ENCODE measurements at regions of chr2 and their contacts with region 1.

Region 1: GRCh38 chr2:202033321-202034248 is at the start of gene FZD7:
- DNase-seq: peak; percentile 90 to 92
- ATAC-seq: peak; percentile 60 to 63
- H3K4me3 ChIP-seq: peak within 1 kb of the TSS; percentile 80 to 97 (median 92)
- H3K27ac ChIP-seq: peak within 1 kb of the TSS; percentile 98 to 100 (median 99)
- H3K4me1 ChIP-seq: peaks cover 33 to 45% of the 10 kb centered on the region in 2 donors
- H3K27me3 ChIP-seq: no peaks in the 10 kb centered on the region
- CTCF ChIP-seq: peak in 3 of 5 experiments; percentile 14 to 44 (median 27)
- POLR2A ChIP-seq: peak; percentile 95 to 97
- total RNA-seq, gene FZD7: 4.4 to 9.4 (median 6.4) TPM

Region 2: GRCh38 chr2:201780674-201781581 is 252.7 kb before region 1 on chr2 and contains the start of gene ALS2:
- in situ Hi-C with region 1: loop called in 1 of 4 experiments (anchors 5 kb)
- intact Hi-C with region 1: loop called (anchors 10 kb)
- DNase-seq: peak; percentile 95 to 98
- ATAC-seq: peak; percentile 99 to 100
- H3K4me3 ChIP-seq: peak within 1 kb of the TSS; percentile 69 to 97 (median 88)
- H3K27ac ChIP-seq: peak within 1 kb of the TSS; percentile 88 to 92 (median 90)
- H3K4me1 ChIP-seq: peaks cover 29 to 31% of the 10 kb centered on the region in 2 donors
- H3K27me3 ChIP-seq: no peaks in the 10 kb centered on the region
- CTCF ChIP-seq: no peak
- POLR2A ChIP-seq: peak; percentile 62 to 67
- total RNA-seq, gene ALS2: 17.1 to 40.6 (median 19.5) TPM

Region 3: GRCh38 chr2:201882353-201883090 is 151.1 kb before region 1 on chr2:
- in situ Hi-C with region 1: loop called in 1 of 4 experiments (anchors 10 kb)
- intact Hi-C with region 1: loop called (anchors 5 kb)
- DNase-seq: no peak
- ATAC-seq: no peak
- H3K4me3 ChIP-seq: peak overlapping the region in 1 of 4 donors; percentile 4
- H3K27ac ChIP-seq: peak overlapping the region; percentile 82 to 90 (median 84)
- H3K4me1 ChIP-seq: peaks cover 28 to 43% of the 10 kb centered on the region in 2 donors
- H3K27me3 ChIP-seq: no peaks in the 10 kb centered on the region
- CTCF ChIP-seq: no peak
- POLR2A ChIP-seq: no peak

Region 4: DNA sequence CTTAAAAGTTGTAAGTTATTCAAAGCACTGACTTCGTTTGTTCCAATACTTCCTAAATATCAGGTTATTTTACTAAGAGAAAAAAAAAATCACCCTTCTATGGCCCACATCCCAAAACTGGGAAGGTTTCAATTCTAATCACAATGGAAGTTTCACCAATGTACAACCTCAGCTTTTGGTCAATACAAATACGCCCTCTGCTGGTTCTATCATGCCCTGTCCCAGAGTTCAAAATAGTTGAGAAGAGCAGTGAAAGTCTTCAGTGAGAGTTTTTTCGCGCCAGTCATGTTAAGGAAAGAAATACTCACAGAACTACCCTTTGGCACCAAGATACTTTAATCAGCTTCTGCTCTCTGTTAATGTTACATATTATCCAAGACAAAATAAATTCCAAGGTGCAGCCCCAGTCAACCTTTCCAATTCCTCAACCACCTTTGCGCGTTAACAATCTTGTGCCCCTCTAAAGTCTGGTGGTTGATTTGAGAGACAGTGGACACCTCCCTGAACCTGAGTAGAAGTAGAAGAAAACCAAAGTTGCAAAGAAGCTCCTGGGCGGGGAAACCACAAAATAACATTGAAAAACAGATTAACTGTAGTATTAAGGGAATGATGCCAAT is 144.9 kb after region 1 on chr2:
- in situ Hi-C with region 1: loop called in 1 of 4 experiments (anchors 5 kb)
- intact Hi-C with region 1: loop called (anchors 1 kb)
- DNase-seq: peak; percentile 22 to 38
- ATAC-seq: peak; percentile 90 to 96
- H3K4me3 ChIP-seq: no peak overlapping the region
- H3K27ac ChIP-seq: no peak overlapping the region
- H3K4me1 ChIP-seq: no peaks in the 10 kb centered on the region
- H3K27me3 ChIP-seq: no peaks in the 10 kb centered on the region
- CTCF ChIP-seq: peak; percentile 75 to 88 (median 79)
- POLR2A ChIP-seq: no peak

Region 5: GRCh38 chr2:202265467-202266277 is 232.1 kb after region 1 on chr2 and contains the start of gene NOP58:
- in situ Hi-C with region 1: no loop called
- intact Hi-C with region 1: loop called (anchors 10 kb)
- DNase-seq: peak; percentile 91 to 92
- ATAC-seq: peak; percentile 99
- H3K4me3 ChIP-seq: peak within 1 kb of the TSS; percentile 77 to 98 (median 85)
- H3K27ac ChIP-seq: peak within 1 kb of the TSS; percentile 95 to 100 (median 98)
- H3K4me1 ChIP-seq: peaks cover 24 to 25% of the 10 kb centered on the region in 2 donors
- H3K27me3 ChIP-seq: no peaks in the 10 kb centered on the region
- CTCF ChIP-seq: peak in 1 of 5 experiments; percentile 6
- POLR2A ChIP-seq: peak; percentile 98 to 99
- total RNA-seq, gene NOP58: 22.5 to 69.9 (median 31.7) TPM

Region 6: GRCh38 chr2:203014456-203015199 is 981.0 kb after region 1 on chr2 and contains the start of gene NBEAL1:
- in situ Hi-C with region 1: no loop called
- intact Hi-C with region 1: loop called (anchors 10 kb)
- DNase-seq: peak; percentile 97 to 98
- ATAC-seq: peak; percentile 94 to 97
- H3K4me3 ChIP-seq: peak within 1 kb of the TSS; percentile 70 to 88 (median 78)
- H3K27ac ChIP-seq: peak within 1 kb of the TSS; percentile 90 to 96 (median 94)
- H3K4me1 ChIP-seq: peaks cover 36 to 42% of the 10 kb centered on the region in 2 donors
- H3K27me3 ChIP-seq: no peaks in the 10 kb centered on the region
- CTCF ChIP-seq: no peak
- POLR2A ChIP-seq: peak; percentile 76 to 86
- total RNA-seq, gene NBEAL1: 9.8 to 21.9 (median 11.3) TPM